HCT116 (cell line): ENCODE measurements at regions of chr10 and their contacts with region 1.

Region 1: GRCh38 chr10:97037365-97038361 is 148.1 kb downstream of the SLIT1 start:
- DNase-seq: peak; percentile 89
- ATAC-seq: peak; percentile 93
- H3K4me3 ChIP-seq: peak overlapping the region; percentile 38 to 55
- H3K27ac ChIP-seq: no peak overlapping the region
- H3K4me1 ChIP-seq: peaks cover 7 to 15% of the 10 kb centered on the region in 2 experiments; a peak in 3 of 4 replicates
- H3K27me3 ChIP-seq: no peaks in the 10 kb centered on the region
- CTCF ChIP-seq: peak; percentile 82 to 96 (median 87)
- POLR2A ChIP-seq: no peak
- RAD21 ChIP-seq: peak; percentile 89

Region 2: GRCh38 chr10:97117372-97117771 is 79.7 kb after region 1 on chr10:
- CTCF ChIA-PET with region 1: interaction called, 6 read pairs
- POLR2A ChIA-PET with region 1: no interaction called
- RAD21 ChIA-PET with region 1: no interaction called
- intact Hi-C with region 1: loop called (anchors 1 kb)
- DNase-seq: peak; percentile 16
- ATAC-seq: peak; percentile 80
- H3K4me3 ChIP-seq: no peak overlapping the region
- H3K27ac ChIP-seq: no peak overlapping the region
- H3K4me1 ChIP-seq: no peaks in the 10 kb centered on the region
- H3K27me3 ChIP-seq: peaks cover 24% of the 10 kb centered on the region; the same call in 1 of the 2 replicates
- CTCF ChIP-seq: peak; percentile 45 to 83 (median 67)
- POLR2A ChIP-seq: no peak
- RAD21 ChIP-seq: peak; percentile 81

Region 3: GRCh38 chr10:97234400-97234799 is 196.7 kb after region 1 on chr10:
- CTCF ChIA-PET with region 1: interaction called, 3 read pairs
- POLR2A ChIA-PET with region 1: no interaction called
- RAD21 ChIA-PET with region 1: interaction called in 1 of 2 experiments, 4 read pairs
- intact Hi-C with region 1: loop called (anchors 1 kb)
- DNase-seq: peak; percentile 12
- ATAC-seq: peak; percentile 44; the same call in 1 of the 2 replicates
- H3K4me3 ChIP-seq: no peak overlapping the region
- H3K27ac ChIP-seq: no peak overlapping the region
- H3K4me1 ChIP-seq: no peaks in the 10 kb centered on the region
- H3K27me3 ChIP-seq: no peaks in the 10 kb centered on the region
- CTCF ChIP-seq: peak; percentile 54 to 75 (median 64); a peak in 5 of 6 replicates
- POLR2A ChIP-seq: no peak
- RAD21 ChIP-seq: peak; percentile 69